ENCODE measurements at regions of chr4 and their contacts with region 1.

Region 1: DNA sequence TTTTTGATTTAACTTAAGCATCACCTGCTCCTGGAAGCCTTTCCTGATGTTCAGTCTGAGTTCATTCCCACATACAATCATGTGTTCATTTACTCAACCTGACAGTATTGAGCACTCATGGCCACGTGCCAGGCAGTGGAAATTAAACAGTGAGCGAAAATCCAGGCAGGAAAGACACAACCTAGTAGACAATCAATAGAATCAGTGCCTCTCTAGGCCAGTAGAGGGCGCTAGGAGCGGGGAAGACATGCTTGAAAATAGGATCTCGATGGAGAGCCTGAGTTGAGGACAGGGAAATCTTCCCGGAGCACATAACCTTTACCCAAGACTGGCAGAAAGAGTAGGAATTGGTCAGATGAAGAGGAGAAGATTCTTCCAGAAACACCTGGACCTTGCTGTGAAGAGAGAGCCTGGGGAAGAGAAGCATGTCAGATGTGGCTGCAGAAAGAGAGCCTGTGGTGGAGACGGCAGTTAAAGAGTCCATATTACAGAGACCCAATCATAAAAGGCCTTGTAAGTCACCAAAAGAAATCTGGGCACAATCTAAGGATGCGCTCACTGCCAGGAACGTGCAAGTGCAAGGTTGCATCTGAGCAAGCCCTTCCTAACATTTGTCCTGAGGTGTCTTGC is 103.5 kb downstream of the LDB2 start:
- DNase-seq: peak; percentile 82
- H3K4me3 Mint-ChIP-seq: no peak overlapping the region
- H3K27ac Mint-ChIP-seq: no peak overlapping the region
- H3K4me1 Mint-ChIP-seq: no peaks in the 10 kb centered on the region
- H3K27me3 Mint-ChIP-seq: no peaks in the 10 kb centered on the region

Region 2: DNA sequence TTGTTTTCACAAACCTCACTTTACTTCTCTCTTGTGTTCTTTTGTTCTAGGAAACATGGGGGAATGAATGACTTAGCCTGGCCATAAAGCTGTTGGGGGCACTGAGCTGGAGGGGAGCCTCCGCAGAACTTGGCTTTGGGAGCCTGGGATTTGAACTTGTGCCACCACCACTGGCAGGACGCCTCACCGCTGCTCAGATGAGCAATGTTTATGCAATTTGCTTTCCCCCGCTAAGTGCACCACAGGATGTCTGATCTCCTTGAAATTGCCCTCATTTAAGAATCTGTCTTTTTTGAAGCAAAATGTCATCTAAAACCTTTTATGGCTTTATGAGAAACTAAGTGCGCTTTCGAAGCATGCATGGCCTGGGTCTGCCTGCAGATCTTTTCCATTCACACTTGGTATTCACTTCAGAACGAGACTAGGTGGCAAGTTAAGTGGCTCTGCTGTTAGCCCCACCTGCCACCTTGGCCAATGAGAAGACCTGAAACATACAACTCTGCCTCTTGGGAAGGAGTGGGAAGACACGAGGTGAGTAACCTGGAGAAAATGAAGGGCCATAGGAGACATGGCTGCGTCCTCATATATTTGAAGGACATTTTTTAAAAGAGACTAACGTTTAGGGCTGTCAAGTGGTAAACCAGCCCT is 15.8 kb before region 1 on chr4:
- intact Hi-C with region 1: no loop called
- DNase-seq: no peak
- H3K4me3 Mint-ChIP-seq: no peak overlapping the region
- H3K27ac Mint-ChIP-seq: no peak overlapping the region
- H3K4me1 Mint-ChIP-seq: no peaks in the 10 kb centered on the region
- H3K27me3 Mint-ChIP-seq: no peaks in the 10 kb centered on the region

Region 3: GRCh38 chr4:17324386-17324830 is 529.5 kb after region 1 on chr4:
- intact Hi-C with region 1: loop called (anchors 1 kb)
- DNase-seq: peak; percentile 84
- H3K4me3 Mint-ChIP-seq: peak overlapping the region; percentile 39
- H3K27ac Mint-ChIP-seq: peak overlapping the region; percentile 48
- H3K4me1 Mint-ChIP-seq: peaks cover 20% of the 10 kb centered on the region
- H3K27me3 Mint-ChIP-seq: no peaks in the 10 kb centered on the region